Kidney (tissue), 22 donors: ENCODE measurements at regions of chr4 and their contacts with region 1.

Region 1: GRCh38 chr4:108834835-108835384 is 72.1 kb upstream of the ETNPPL start:
- DNase-seq: peak in 2 of 5 donors; percentile 63 to 82
- H3K4me3 ChIP-seq: no peak overlapping the region
- H3K27ac ChIP-seq: no peak overlapping the region
- H3K4me1 ChIP-seq: no peaks in the 10 kb centered on the region
- H3K27me3 ChIP-seq: no peaks in the 10 kb centered on the region
- CTCF ChIP-seq: peak; percentile 57

Region 2: GRCh38 chr4:108224611-108225053 is 610.3 kb before region 1 on chr4:
- intact Hi-C with region 1: no loop called
- DNase-seq: peak in 1 of 5 donors; percentile 54
- H3K4me3 ChIP-seq: no peak overlapping the region
- H3K27ac ChIP-seq: no peak overlapping the region
- H3K4me1 ChIP-seq: no peaks in the 10 kb centered on the region
- H3K27me3 ChIP-seq: no peaks in the 10 kb centered on the region
- CTCF ChIP-seq: no peak

Region 3: DNA sequence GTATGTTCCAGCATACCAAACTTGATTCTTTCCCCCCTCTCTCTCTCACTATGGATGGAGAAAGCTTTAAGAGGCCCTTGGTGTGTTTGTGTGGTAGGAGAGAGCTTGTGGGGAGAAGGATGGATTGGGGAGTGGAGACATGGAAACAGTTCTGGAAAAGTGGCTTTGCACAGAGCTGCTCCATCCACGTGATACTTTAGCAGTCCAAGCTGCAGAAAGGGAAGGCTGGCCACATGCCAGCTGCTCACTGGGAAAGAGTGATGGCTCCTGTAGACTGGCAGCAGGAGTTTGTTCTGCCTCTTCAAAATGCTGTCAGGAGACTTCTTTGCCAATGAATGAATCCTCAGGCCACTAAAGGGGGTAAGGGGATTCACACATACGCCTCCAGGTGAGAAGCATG is 577.1 kb after region 1 on chr4:
- intact Hi-C with region 1: loop called (anchors 10 kb)
- DNase-seq: peak in 2 of 5 donors; percentile 29 to 63
- H3K4me3 ChIP-seq: no peak overlapping the region
- H3K27ac ChIP-seq: no peak overlapping the region
- H3K4me1 ChIP-seq: no peaks in the 10 kb centered on the region
- H3K27me3 ChIP-seq: no peaks in the 10 kb centered on the region
- CTCF ChIP-seq: no peak